Psoas muscle (tissue), 8 donors: ENCODE measurements at regions of chr5 and their contacts with region 1.

Region 1: GRCh38 chr5:140639148-140639979 is at the start of gene TMCO6:
- DNase-seq: peak; percentile 99
- ATAC-seq: peak; percentile 99
- H3K4me3 ChIP-seq: peak within 1 kb of the TSS; percentile 82
- H3K27ac ChIP-seq: peak within 1 kb of the TSS; percentile 90
- H3K4me1 ChIP-seq: peaks cover 7% of the 10 kb centered on the region
- H3K27me3 ChIP-seq: no peaks in the 10 kb centered on the region
- CTCF ChIP-seq: peak; percentile 66
- total RNA-seq, gene TMCO6: 3.6 to 4.9 (median 4.1) TPM

Region 2: DNA sequence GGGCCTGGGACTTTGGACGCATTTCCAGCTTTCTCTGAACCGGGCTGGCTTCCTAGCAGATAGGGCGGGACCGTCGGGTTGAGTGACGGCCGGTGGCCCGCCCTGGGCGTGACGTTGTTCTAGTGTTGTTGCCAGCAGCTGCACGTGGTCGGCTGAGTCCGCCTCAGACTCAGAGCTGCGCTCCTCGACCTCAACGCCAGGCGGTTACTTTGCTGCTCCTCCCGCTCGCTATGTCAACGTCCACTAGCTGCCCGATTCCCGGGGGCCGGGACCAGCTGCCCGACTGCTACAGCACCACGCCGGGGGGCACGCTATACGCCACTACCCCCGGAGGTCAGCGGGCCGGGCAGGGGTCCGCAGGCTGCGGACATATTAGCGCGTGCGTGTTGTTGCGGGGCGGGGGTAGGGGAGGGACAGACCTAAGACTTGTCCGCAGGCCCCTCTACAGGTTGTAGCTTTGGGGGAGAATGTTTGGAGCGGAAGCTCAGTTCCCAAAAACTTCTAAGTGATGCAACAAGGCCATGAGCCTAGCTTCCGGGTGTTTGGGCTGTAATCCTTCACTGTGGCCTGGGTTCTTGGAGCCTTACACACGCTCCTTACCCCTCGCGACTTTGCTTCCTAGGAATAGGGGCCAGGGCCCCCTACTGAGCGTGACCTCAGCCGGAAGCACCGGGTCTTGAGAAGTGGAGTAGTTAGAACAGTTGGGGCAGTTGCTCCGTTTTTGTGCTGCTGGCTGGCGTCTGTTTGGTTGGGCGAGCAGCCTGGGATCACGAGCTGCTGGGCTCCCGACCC is 91.7 kb before region 1 on chr5 and contains the start of gene EIF4EBP3:
- intact Hi-C with region 1: loop called (anchors 2 kb)
- DNase-seq: peak; percentile 97 to 99
- ATAC-seq: peak; percentile 88 to 92 (median 90)
- H3K4me3 ChIP-seq: peak within 1 kb of the TSS; percentile 67
- H3K27ac ChIP-seq: peak within 1 kb of the TSS; percentile 98
- H3K4me1 ChIP-seq: peaks cover 43% of the 10 kb centered on the region
- H3K27me3 ChIP-seq: no peaks in the 10 kb centered on the region
- CTCF ChIP-seq: peak; percentile 66
- total RNA-seq, gene EIF4EBP3: 31.7 to 116 (median 40.5) TPM

Region 3: DNA sequence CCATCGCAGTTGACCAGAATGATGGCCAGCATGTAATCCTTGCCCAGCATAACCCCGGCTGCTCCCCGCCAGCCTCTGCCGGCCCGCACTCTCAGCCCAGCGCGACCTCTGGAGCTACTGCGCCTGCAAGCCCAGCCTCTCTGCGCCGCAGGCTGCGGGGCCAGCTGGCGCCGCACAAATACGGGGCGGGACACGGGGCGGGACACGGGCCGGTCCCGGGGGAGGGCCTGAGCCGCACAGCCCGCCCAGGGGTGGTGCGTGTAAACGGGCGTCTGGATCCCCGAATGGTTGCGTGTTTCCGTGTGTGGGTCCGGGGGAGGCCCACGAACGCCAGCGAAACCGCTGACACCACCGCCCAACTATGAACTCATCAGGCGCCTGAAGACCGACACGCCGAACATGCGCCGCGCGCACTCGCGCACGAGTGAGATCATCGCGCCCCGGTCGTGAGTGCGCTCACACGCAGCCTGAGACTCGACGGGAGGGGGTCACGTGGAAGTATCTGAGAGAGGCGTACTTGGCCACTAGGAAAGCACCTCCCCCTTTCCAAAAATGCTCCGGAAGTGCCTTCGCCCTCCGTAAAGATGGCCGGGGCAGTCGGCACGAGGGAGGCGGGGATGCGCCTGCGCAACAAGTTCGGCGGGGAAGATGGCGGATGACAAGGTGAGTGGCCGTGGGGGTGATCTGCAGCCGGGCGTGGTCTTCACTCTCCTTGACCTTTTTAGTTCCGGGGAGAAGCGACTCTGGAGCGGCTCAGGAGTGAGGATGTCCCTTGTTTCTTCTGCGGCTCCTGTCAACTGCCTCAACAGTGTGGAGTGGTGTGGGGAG is 75.0 kb before region 1 on chr5 and contains the starts of genes APBB3 and SLC35A4:
- intact Hi-C with region 1: loop called (anchors 2 to 5 kb)
- DNase-seq: peak; percentile 98 to 99
- ATAC-seq: peak; percentile 89 to 90 (median 90)
- H3K4me3 ChIP-seq: peak within 1 kb of the TSS; percentile 82
- H3K27ac ChIP-seq: peak within 1 kb of the TSS; percentile 97
- H3K4me1 ChIP-seq: peaks cover 68% of the 10 kb centered on the region
- H3K27me3 ChIP-seq: no peaks in the 10 kb centered on the region
- CTCF ChIP-seq: no peak
- total RNA-seq, gene APBB3: 9.5 to 25.4 (median 16.4) TPM
- total RNA-seq, gene SLC35A4: 95.7 to 129 (median 117) TPM